ENCODE measurements at regions of chr11 and their contacts with region 1.

Region 1: GRCh38 chr11:765025-765801 is 12.1 kb downstream of the GATD1 start:
- DNase-seq: peak in 1 of 2 experiments; percentile 80
- H3K4me3 ChIP-seq: no peak overlapping the region
- H3K4me1 ChIP-seq: no peaks in the 10 kb centered on the region
- H3K27me3 ChIP-seq: no peaks in the 10 kb centered on the region

Region 2: GRCh38 chr11:396948-397548 is 368.2 kb before region 1 on chr11:
- in situ Hi-C with region 1: no loop called
- DNase-seq: peak; percentile 54 to 85
- H3K4me3 ChIP-seq: peak overlapping the region; percentile 15
- H3K4me1 ChIP-seq: no peaks in the 10 kb centered on the region
- H3K27me3 ChIP-seq: no peaks in the 10 kb centered on the region

Region 3: GRCh38 chr11:568306-569157 is 196.7 kb before region 1 on chr11:
- in situ Hi-C with region 1: loop called (anchors 25 kb)
- DNase-seq: peak; percentile 93 to 96
- H3K4me3 ChIP-seq: peak overlapping the region; percentile 48
- H3K4me1 ChIP-seq: peaks cover 10% of the 10 kb centered on the region
- H3K27me3 ChIP-seq: no peaks in the 10 kb centered on the region

Region 4: GRCh38 chr11:640021-640706 is 125.0 kb before region 1 on chr11:
- in situ Hi-C with region 1: loop called (anchors 10 kb)
- DNase-seq: no peak
- H3K4me3 ChIP-seq: no peak overlapping the region
- H3K4me1 ChIP-seq: peaks cover 4% of the 10 kb centered on the region
- H3K27me3 ChIP-seq: no peaks in the 10 kb centered on the region